ENCODE measurements at regions of chr18 and their contacts with region 1.

Region 1: GRCh38 chr18:33440060-33441043 is at the start of gene CCDC178:
- DNase-seq: peak; percentile 67
- H3K4me3 ChIP-seq: peak within 1 kb of the TSS; percentile 48
- H3K27ac ChIP-seq: no peak within 1 kb of the TSS
- H3K4me1 ChIP-seq: no peaks in the 10 kb centered on the region
- H3K27me3 ChIP-seq: peaks cover 34% of the 10 kb centered on the region
- CTCF ChIP-seq: peak; percentile 52
- total RNA-seq, gene CCDC178: not detected in 2 replicates

Region 2: GRCh38 chr18:33051407-33051806 is 388.9 kb before region 1 on chr18:
- CTCF ChIA-PET with region 1: no interaction called
- POLR2A ChIA-PET with region 1: no interaction called
- intact Hi-C with region 1: no loop called
- DNase-seq: peak; percentile 1
- H3K4me3 ChIP-seq: no peak overlapping the region
- H3K27ac ChIP-seq: no peak overlapping the region
- H3K4me1 ChIP-seq: no peaks in the 10 kb centered on the region
- H3K27me3 ChIP-seq: no peaks in the 10 kb centered on the region
- CTCF ChIP-seq: no peak

Region 3: GRCh38 chr18:33184958-33185357 is 255.4 kb before region 1 on chr18:
- CTCF ChIA-PET with region 1: no interaction called
- POLR2A ChIA-PET with region 1: no interaction called
- intact Hi-C with region 1: no loop called
- DNase-seq: no peak
- H3K4me3 ChIP-seq: no peak overlapping the region
- H3K27ac ChIP-seq: no peak overlapping the region
- H3K4me1 ChIP-seq: no peaks in the 10 kb centered on the region
- H3K27me3 ChIP-seq: peaks cover 4% of the 10 kb centered on the region
- CTCF ChIP-seq: no peak

Region 4: DNA sequence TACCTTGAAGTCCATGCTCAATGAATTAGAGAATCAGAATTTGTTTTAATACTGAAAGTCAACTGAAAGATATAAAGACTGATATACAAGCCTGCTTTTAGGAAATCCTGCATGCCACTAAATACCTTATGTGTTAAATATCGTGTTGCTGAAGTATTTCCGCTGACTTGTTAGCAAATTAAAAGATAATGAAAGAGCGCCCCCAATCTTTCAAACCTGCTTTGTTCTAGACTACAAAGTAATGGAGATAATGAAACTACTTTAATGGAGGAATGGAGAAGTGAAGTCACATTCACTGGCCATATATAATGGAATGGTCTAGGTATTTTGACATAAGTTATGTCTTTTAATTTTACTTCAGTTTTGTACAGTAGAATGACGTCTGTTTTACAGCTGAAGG is 233.3 kb after region 1 on chr18:
- CTCF ChIA-PET with region 1: no interaction called
- POLR2A ChIA-PET with region 1: no interaction called
- intact Hi-C with region 1: loop called (anchors 10 kb)
- DNase-seq: peak; percentile 15
- H3K4me3 ChIP-seq: no peak overlapping the region
- H3K27ac ChIP-seq: no peak overlapping the region
- H3K4me1 ChIP-seq: no peaks in the 10 kb centered on the region
- H3K27me3 ChIP-seq: no peaks in the 10 kb centered on the region
- CTCF ChIP-seq: peak; percentile 35